Activated CD4-positive, alpha-beta memory T cell treated with anti-CD3 and anti-CD28 coated beads for 36 hours (primary cell): ENCODE measurements at regions of chrX and their contacts with region 1.

Region 1: DNA sequence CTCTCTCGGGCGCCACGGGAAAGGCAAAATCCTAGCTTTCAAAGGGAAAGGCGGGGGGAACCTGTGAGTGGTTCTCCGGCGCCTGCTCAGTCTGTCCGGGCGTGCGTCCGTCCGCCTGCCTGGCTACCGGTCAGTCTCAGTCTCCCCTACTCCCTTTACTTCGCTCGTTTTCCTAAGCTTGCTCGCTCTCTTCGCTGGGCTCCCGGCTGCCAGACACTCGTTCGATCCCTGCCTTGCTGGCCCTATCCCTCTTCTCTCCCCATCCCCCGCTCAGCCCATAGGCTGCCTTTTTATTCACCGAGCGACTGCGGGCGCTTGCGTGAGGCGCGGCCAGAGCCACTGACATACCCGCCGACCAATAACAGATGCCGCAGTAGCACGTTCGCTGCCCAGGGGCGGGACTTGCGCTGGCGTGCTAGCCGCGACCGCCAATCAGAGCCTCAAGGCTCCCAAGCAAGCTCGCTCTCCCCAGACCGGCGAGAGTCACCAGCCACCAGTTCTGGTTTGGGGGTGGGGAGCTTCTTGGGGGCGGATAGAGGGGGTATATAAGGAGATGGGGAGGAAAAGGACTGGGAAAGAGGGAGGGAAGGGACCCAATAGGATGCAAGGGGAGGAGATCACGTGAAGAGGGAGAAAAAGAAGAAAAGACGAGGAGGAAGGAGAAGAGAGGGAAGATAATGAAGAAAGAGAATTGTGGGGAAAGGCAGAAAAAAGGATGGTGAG is 30.0 kb downstream of the ARHGEF9 start:
- DNase-seq: peak; percentile 92
- H3K4me3 Mint-ChIP-seq: peak overlapping the region; percentile 95
- H3K27ac Mint-ChIP-seq: peak overlapping the region; percentile 96
- H3K4me1 Mint-ChIP-seq: peaks cover 33% of the 10 kb centered on the region
- H3K27me3 Mint-ChIP-seq: no peaks in the 10 kb centered on the region

Region 2: GRCh38 chrX:63350941-63351616 is 403.9 kb before region 1 on chrX and contains the start of gene SPIN4:
- CTCF ChIA-PET with region 1: no interaction called
- POLR2A ChIA-PET with region 1: no interaction called
- intact Hi-C with region 1: loop called (anchors 10 kb)
- DNase-seq: peak; percentile 79
- H3K4me3 Mint-ChIP-seq: peak within 1 kb of the TSS; percentile 86
- H3K27ac Mint-ChIP-seq: peak within 1 kb of the TSS; percentile 23
- H3K4me1 Mint-ChIP-seq: peaks cover 10% of the 10 kb centered on the region
- H3K27me3 Mint-ChIP-seq: no peaks in the 10 kb centered on the region
- total RNA-seq, gene SPIN4: 4.4 to 4.5 TPM

Region 3: GRCh38 chrX:63664083-63664482 is 90.9 kb before region 1 on chrX:
- CTCF ChIA-PET with region 1: no interaction called
- POLR2A ChIA-PET with region 1: no interaction called
- intact Hi-C with region 1: no loop called
- DNase-seq: no peak
- H3K4me3 Mint-ChIP-seq: no peak overlapping the region
- H3K27ac Mint-ChIP-seq: no peak overlapping the region
- H3K4me1 Mint-ChIP-seq: no peaks in the 10 kb centered on the region
- H3K27me3 Mint-ChIP-seq: no peaks in the 10 kb centered on the region

Region 4: DNA sequence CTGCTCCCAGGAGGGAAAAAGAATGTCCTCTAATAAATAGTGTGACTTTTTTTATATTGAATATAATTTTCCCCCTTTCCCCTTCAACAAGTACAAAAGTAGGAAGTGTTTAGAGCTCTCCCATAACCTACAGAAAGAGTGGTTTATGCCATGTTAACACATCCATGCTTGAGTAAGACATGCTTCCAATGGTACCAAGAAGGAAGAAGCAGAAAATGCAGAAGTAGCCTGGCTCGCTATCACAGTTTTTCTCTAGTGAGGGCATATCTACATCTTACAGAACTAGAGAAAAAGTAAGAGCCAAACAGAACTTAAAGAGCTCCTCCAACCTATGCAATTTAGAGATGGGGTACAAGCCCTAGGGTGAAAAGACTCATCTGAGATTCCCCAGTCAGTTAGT is 52.5 kb before region 1 on chrX:
- CTCF ChIA-PET with region 1: no interaction called
- POLR2A ChIA-PET with region 1: no interaction called
- intact Hi-C with region 1: no loop called
- DNase-seq: no peak
- H3K4me3 Mint-ChIP-seq: no peak overlapping the region
- H3K27ac Mint-ChIP-seq: no peak overlapping the region
- H3K4me1 Mint-ChIP-seq: no peaks in the 10 kb centered on the region
- H3K27me3 Mint-ChIP-seq: no peaks in the 10 kb centered on the region

Region 5: DNA sequence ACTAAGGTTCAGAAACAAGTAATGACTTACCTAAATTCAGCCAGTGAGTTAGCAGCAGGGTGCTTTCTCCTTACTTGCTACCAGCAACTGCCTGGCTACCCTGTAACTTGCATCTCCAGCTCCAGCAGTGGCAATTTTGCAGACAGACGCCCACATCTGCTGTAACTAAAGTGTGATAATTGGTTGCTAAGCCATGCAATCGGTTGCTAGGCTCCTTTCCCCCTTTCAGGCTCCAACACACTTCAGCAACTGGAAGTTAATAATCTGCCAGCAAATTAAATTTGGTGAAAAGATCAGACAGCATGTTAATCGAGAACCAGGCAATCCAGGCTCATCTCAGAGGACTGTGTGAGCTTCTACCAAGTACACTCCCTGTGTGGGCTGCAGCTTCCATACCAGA is 54.2 kb after region 1 on chrX:
- CTCF ChIA-PET with region 1: no interaction called
- POLR2A ChIA-PET with region 1: no interaction called
- intact Hi-C with region 1: no loop called
- DNase-seq: no peak
- H3K4me3 Mint-ChIP-seq: no peak overlapping the region
- H3K27ac Mint-ChIP-seq: no peak overlapping the region
- H3K4me1 Mint-ChIP-seq: no peaks in the 10 kb centered on the region
- H3K27me3 Mint-ChIP-seq: peaks cover 1% of the 10 kb centered on the region